IMR-90 (cell line): ENCODE measurements at regions of chr6 and their contacts with region 1.

Region 1: GRCh38 chr6:8624665-8625064 is 189.3 kb upstream of the SLC35B3 start:
- DNase-seq: no peak
- ATAC-seq: no peak
- H3K4me3 ChIP-seq: no peak overlapping the region
- H3K27ac ChIP-seq: no peak overlapping the region
- H3K4me1 ChIP-seq: no peaks in the 10 kb centered on the region
- H3K27me3 ChIP-seq: no peaks in the 10 kb centered on the region
- CTCF ChIP-seq: no peak
- POLR2A ChIP-seq: no peak
- RAD21 ChIP-seq: no peak

Region 2: GRCh38 chr6:8579372-8579771 is 45.3 kb before region 1 on chr6:
- CTCF ChIA-PET with region 1: no interaction called
- POLR2A ChIA-PET with region 1: no interaction called
- dilution Hi-C with region 1: no loop called
- in situ Hi-C with region 1: no loop called
- intact Hi-C with region 1: loop called (anchors 1 kb)
- DNase-seq: no peak
- ATAC-seq: no peak
- H3K4me3 ChIP-seq: no peak overlapping the region
- H3K27ac ChIP-seq: no peak overlapping the region
- H3K4me1 ChIP-seq: no peaks in the 10 kb centered on the region
- H3K27me3 ChIP-seq: no peaks in the 10 kb centered on the region
- CTCF ChIP-seq: no peak
- POLR2A ChIP-seq: no peak
- RAD21 ChIP-seq: no peak

Region 3: DNA sequence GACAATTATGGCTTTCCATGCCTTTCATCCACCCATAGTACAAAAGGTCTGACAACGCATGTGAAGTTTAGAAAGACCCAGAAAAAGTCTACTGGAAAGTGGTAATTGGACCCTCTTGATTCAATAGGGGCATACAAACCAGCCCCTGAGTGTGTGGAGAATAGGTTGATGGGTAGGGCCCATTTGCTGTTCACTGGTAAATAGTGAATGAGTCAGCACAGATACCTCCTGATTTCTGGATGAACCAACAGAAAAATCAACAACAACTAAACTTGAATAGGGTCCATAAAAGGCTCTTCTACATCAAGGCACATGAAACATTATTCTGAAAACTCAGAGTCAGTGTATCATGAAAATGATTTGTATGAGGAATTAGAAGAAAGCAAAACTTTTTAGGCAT is 46.1 kb after region 1 on chr6:
- CTCF ChIA-PET with region 1: no interaction called
- POLR2A ChIA-PET with region 1: no interaction called
- dilution Hi-C with region 1: no loop called
- in situ Hi-C with region 1: no loop called
- intact Hi-C with region 1: no loop called
- DNase-seq: no peak
- ATAC-seq: no peak
- H3K4me3 ChIP-seq: no peak overlapping the region
- H3K27ac ChIP-seq: no peak overlapping the region
- H3K4me1 ChIP-seq: no peaks in the 10 kb centered on the region
- H3K27me3 ChIP-seq: no peaks in the 10 kb centered on the region
- CTCF ChIP-seq: no peak
- POLR2A ChIP-seq: no peak
- RAD21 ChIP-seq: no peak